GM12878 (cell line): ENCODE measurements at regions of chr10 and their contacts with region 1.

Region 1: GRCh38 chr10:28569506-28570159 is 36.7 kb downstream of the WAC start:
- DNase-seq: no peak
- ATAC-seq: peak; percentile 47; the same call in 2 of the 3 replicates
- H3K4me3 ChIP-seq: no peak overlapping the region
- H3K27ac ChIP-seq: no peak overlapping the region
- H3K4me1 ChIP-seq: no peaks in the 10 kb centered on the region
- H3K27me3 ChIP-seq: no peaks in the 10 kb centered on the region
- CTCF ChIP-seq: no peak
- EP300 ChIP-seq: no peak
- POLR2A ChIP-seq: no peak
- RAD21 ChIP-seq: no peak

Region 2: DNA sequence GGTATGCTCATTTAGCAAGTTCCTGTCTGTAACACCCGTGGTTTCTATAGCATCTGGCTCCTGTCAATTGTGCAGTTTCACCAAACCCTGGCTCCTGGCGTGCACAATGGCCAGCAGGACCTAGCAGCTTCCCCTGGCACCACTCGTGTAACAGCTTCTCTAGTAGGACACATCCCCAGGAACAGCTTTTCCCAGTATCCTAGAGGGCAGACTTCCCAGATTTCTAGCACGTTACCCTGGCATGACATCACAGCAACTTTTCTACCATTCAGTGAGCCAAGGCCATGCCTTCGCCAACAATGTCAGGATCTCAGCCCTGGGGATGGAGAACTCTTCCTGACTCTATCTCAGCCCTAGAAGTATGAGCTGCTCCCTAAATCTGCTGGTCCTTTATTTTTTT is 1421.9 kb before region 1 on chr10:
- CTCF ChIA-PET with region 1: no interaction called
- POLR2A ChIA-PET with region 1: no interaction called
- RAD21 ChIA-PET with region 1: no interaction called
- SMC1A ChIA-PET with region 1: no interaction called
- in situ Hi-C with region 1: loop called (anchors 25 kb)
- intact Hi-C with region 1: no loop called
- DNase-seq: no peak
- ATAC-seq: peak; percentile 25
- H3K4me3 ChIP-seq: no peak overlapping the region
- H3K27ac ChIP-seq: no peak overlapping the region
- H3K4me1 ChIP-seq: no peaks in the 10 kb centered on the region; the same call in 1 of the 2 replicates
- H3K27me3 ChIP-seq: no peaks in the 10 kb centered on the region
- CTCF ChIP-seq: no peak
- EP300 ChIP-seq: no peak
- POLR2A ChIP-seq: no peak
- RAD21 ChIP-seq: no peak

Region 3: DNA sequence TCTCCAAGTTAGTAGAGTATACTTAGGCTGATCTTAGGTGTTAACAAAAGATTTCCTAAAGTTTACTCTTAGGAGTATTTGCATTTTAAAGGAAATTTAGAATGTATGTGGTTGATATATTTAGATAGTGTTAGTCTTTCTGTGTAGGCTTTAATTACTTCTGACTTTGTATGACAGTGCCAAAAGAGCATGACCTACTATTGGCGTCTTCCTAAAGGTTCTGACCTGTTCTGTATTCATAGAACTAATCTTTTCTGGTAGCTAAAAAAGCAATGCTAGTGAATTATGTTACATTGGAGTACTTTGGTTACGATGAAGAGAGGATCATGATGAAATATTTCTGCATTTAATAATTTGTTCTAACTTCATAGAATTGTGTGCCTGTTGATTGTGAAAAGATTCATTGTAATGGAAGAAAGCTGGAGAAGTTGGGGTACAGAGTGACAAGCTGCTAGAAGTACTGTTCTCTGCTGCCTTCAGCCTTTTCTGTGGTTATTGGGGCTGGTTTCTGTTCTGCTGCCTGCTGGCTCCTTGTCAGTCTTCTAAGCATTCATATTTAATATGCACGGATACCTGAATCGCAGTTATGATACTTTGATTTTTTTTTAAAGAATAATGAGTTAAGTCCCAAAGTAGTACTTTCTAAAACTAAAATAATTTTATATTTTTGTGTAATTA is 23.5 kb before region 1 on chr10:
- CTCF ChIA-PET with region 1: interaction called, 5 read pairs
- POLR2A ChIA-PET with region 1: no interaction called
- RAD21 ChIA-PET with region 1: interaction called, 4 read pairs
- SMC1A ChIA-PET with region 1: interaction called, 14 read pairs
- in situ Hi-C with region 1: no loop called
- intact Hi-C with region 1: no loop called
- DNase-seq: no peak
- ATAC-seq: peak; percentile 74
- H3K4me3 ChIP-seq: no peak overlapping the region
- H3K27ac ChIP-seq: 0 out of 2 replicates have a peak overlapping the region, but pooled peaks have one; percentile 9
- H3K4me1 ChIP-seq: peaks cover 16% of the 10 kb centered on the region
- H3K27me3 ChIP-seq: no peaks in the 10 kb centered on the region
- CTCF ChIP-seq: no peak
- EP300 ChIP-seq: no peak
- POLR2A ChIP-seq: no peak
- RAD21 ChIP-seq: no peak

Region 4: DNA sequence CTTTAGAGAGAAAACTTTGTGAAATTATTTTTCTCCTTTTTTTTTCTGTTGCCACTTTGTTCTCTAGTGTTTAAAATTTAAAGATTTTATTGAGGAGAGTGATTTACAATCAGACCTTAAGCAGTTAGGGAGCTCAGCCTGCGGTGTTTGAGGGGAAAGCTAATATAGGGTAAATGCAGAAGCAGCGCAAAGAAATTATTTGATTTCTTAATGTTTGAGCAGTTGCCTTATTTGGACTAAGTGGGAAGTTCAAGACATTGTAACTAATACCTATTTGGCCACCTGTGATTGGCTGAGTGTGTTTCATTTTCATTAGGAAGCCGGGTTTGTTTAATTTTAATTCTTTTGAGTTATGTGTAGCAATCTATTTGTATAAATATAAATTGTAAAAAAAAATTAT is 11.4 kb before region 1 on chr10:
- CTCF ChIA-PET with region 1: interaction called, 4 read pairs
- POLR2A ChIA-PET with region 1: interaction called, 4 read pairs
- RAD21 ChIA-PET with region 1: no interaction called
- SMC1A ChIA-PET with region 1: interaction called, 10 read pairs
- in situ Hi-C with region 1: no loop called
- intact Hi-C with region 1: no loop called
- DNase-seq: no peak
- ATAC-seq: no peak
- H3K4me3 ChIP-seq: no peak overlapping the region
- H3K27ac ChIP-seq: no peak overlapping the region
- H3K4me1 ChIP-seq: 0 out of 2 replicates have a peak, but pooled peaks cover 4% of the 10 kb centered on the region
- H3K27me3 ChIP-seq: no peaks in the 10 kb centered on the region
- CTCF ChIP-seq: no peak
- EP300 ChIP-seq: no peak
- POLR2A ChIP-seq: no peak
- RAD21 ChIP-seq: no peak

Region 5: DNA sequence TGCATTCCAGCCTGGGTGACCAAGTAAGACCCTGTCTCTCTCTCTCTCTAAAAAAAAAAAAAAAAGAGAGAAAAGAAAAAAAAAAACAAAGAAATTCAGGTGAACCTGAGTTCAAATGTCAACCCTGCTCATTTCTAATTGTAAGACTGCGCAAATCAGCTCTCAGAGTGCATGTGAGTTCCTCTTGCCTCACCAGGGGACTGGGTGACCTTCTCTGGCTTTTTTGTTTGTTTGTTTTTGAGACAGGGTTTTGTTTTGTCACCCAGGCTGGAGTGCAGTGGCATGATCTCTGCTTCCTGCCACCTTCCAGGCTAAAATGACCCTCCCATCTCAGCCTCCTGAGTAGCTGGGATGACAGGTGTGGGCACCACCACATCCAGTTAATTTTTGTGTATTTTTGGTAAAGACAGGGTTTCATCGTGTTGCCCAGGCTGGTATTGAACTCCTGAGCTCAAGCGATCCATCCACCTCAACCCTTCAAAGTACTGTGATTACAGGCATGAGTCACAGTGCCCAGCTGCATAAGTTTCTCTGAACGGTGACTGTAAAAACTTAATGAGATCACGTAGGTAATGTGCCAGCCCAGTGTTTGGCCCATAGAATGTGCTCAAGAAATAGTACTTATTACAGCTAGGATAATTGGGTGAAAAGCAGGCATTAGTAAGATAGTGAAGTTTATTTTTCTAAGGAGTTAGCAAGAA is 62.4 kb after region 1 on chr10:
- CTCF ChIA-PET with region 1: no interaction called
- POLR2A ChIA-PET with region 1: no interaction called
- RAD21 ChIA-PET with region 1: no interaction called
- SMC1A ChIA-PET with region 1: no interaction called
- in situ Hi-C with region 1: no loop called
- intact Hi-C with region 1: no loop called
- DNase-seq: no peak
- ATAC-seq: no peak
- H3K4me3 ChIP-seq: no peak overlapping the region
- H3K27ac ChIP-seq: no peak overlapping the region
- H3K4me1 ChIP-seq: no peaks in the 10 kb centered on the region
- H3K27me3 ChIP-seq: no peaks in the 10 kb centered on the region
- CTCF ChIP-seq: no peak
- EP300 ChIP-seq: no peak
- POLR2A ChIP-seq: no peak
- RAD21 ChIP-seq: no peak